A549 (cell line): ENCODE measurements at regions of chr9 and their contacts with region 1.

Region 1: DNA sequence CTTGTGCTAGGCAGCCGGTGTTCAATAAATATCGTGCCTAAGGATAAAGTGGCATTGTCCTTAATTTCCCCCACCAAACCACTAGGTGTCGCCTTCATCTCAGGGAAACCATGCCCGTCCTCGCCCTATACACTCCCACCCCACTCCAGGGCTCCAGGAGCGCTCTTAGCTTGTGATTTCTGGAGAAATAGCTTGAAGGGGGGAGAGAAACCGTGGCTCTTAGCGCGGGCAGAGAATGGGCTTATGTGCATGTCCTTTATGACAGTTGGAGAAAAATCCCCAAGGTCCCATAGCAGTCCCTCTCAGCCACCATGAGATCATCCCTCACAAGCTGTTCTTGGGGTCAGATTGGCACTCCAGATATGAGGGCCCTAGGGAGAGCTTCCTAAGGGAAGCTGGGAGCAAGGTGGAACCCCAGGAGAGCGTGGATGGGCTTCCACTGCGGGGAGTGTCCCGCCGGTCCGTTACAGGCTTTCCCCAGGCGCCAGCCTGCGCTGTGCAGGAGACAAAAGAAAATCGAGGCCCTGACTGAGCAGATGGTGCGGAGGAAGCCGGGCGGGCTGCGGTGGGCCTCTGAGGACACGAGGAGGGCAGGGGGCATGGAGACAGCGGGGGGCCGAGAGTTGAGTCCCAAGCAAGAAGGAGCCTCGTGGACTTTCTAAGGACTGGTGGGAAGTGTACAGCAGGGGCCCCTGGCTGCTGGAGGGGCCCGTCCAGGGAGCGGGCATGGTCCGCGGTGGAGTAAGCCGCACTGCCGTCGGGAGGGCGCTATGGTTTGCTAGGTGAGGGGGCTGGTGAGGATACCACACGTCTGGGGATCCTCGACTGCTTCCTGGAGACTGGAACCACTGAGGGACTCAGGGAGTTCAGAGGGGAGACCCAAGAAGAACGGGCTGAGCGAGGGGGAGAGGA is 750 bp upstream of the NPR2 start:
- DNase-seq: peak; percentile 65 to 85
- ATAC-seq: peak; percentile 87 to 97
- H3K4me3 ChIP-seq: no peak overlapping the region
- H3K27ac ChIP-seq: peak overlapping the region in 1 of 2 experiments; percentile 22; a peak in 1 of 6 replicates
- H3K4me1 ChIP-seq: peaks cover 9% of the 10 kb centered on the region
- CTCF ChIP-seq: peak; percentile 91
- EP300 ChIP-seq: no peak
- POLR2A ChIP-seq: no peak
- RAD21 ChIP-seq: peak; percentile 85 to 92

Region 2: DNA sequence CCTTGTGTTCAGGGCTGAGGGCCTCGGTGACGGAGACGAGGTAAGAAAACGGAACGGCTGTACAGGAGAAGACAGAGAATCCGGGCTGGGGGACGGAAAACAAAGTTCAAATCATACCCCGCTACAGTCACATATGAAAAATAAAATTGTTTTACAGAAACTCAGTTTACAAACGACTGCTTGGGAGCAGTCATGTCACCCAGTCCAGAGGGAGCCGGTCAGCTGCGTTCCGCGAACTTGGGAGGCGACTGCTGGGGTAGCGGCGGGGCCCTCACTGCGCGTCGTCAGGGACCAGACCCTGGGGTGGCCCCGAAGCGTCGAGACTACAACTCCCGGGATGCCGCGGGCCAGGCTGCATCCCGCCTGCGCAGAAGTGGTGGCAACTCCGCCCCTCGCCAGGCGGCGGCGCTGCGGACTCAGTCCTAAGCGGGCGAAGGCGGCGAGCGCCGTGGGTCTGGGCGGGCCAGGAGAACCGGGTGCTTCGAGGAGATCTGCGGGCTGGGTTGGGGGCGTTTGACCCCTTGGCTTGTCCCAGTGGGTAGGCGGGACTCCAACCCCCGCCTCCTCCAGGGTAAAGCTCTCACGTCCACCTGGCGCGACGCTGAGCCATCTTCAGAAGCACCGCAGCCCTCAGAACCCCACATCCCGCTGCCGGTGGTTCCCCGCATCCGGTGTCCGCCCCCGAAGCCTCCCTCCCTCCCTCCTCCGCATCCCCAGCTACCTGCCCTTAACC is 143.9 kb before region 1 on chr9:
- CTCF ChIA-PET with region 1: interaction called, 11 read pairs
- POLR2A ChIA-PET with region 1: no interaction called
- DNase-seq: peak; percentile 90 to 95
- ATAC-seq: peak; percentile 93 to 97
- H3K4me3 ChIP-seq: peak overlapping the region; percentile 52
- H3K27ac ChIP-seq: peak overlapping the region; percentile 92 to 93
- H3K4me1 ChIP-seq: peaks cover 13% of the 10 kb centered on the region
- CTCF ChIP-seq: peak; percentile 87
- EP300 ChIP-seq: no peak
- POLR2A ChIP-seq: peak; percentile 66
- RAD21 ChIP-seq: peak; percentile 81 to 91

Region 3: GRCh38 chr9:35756275-35757225 is 34.1 kb before region 1 on chr9:
- CTCF ChIA-PET with region 1: interaction called, 22 read pairs
- POLR2A ChIA-PET with region 1: interaction called, 3 read pairs
- DNase-seq: peak; percentile 64 to 86
- ATAC-seq: peak; percentile 89 to 91
- H3K4me3 ChIP-seq: peak overlapping the region; percentile 83
- H3K27ac ChIP-seq: peak overlapping the region; percentile 95 to 97
- H3K4me1 ChIP-seq: peaks cover 16% of the 10 kb centered on the region
- CTCF ChIP-seq: peak; percentile 69
- EP300 ChIP-seq: no peak
- POLR2A ChIP-seq: peak; percentile 19
- RAD21 ChIP-seq: peak; percentile 34 to 42; a peak in 3 of 5 replicates

Region 4: DNA sequence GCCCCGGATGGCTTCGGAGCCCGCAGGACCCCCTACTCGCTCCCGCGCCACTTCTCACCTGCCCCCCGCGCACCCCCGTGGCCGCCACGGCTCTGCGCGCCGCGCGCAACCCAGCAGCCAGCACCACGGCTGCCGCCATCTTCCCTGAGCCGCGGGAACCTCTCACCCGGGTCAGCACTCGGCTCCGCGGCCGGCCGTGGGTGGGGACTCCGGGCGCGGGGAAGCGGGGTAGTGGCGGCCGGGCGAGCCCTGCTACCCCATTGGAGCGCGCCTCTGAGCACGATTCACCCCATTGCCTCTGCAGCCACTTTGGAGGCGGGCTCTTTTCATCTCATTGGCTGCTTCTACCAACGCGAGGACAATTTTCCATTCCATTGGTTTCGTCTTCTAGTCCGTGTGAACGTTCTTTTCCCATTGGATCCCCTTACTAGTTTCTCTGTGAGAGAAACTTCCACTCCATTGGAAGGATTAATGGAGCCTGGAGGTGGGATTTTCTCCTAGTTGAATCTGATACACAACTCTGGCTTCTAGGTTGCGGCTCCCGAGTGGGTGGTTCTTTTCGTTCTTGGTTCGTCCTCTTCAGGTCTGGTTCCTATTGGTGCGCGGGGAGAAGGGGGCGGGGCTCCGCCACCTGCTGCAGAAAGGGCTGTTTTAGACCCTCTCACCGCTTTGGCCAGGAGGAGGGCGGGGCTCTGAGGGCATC is 24.4 kb after region 1 on chr9 and contains the start of gene HINT2:
- CTCF ChIA-PET with region 1: interaction called, 68 read pairs
- POLR2A ChIA-PET with region 1: no interaction called
- DNase-seq: peak; percentile 98
- ATAC-seq: peak; percentile 86 to 92
- H3K4me3 ChIP-seq: peak within 1 kb of the TSS; percentile 73
- H3K27ac ChIP-seq: peak within 1 kb of the TSS; percentile 94 to 96
- H3K4me1 ChIP-seq: peaks cover 21% of the 10 kb centered on the region
- CTCF ChIP-seq: no peak
- EP300 ChIP-seq: no peak
- POLR2A ChIP-seq: peak; percentile 88
- RAD21 ChIP-seq: 0 out of 5 replicates have a peak, but pooled peaks of 1 of the 2 experiments have one; percentile 2
- polyA plus RNA-seq, gene HINT2: 46.9 and 47.3 TPM in 2 replicates

Region 5: GRCh38 chr9:35859310-35859989 is 68.8 kb after region 1 on chr9:
- CTCF ChIA-PET with region 1: interaction called, 18 read pairs
- POLR2A ChIA-PET with region 1: no interaction called
- DNase-seq: peak; percentile 29 to 42
- ATAC-seq: peak; percentile 66 to 74
- H3K4me3 ChIP-seq: no peak overlapping the region
- H3K27ac ChIP-seq: no peak overlapping the region
- H3K4me1 ChIP-seq: no peaks in the 10 kb centered on the region
- CTCF ChIP-seq: no peak
- EP300 ChIP-seq: no peak
- POLR2A ChIP-seq: no peak
- RAD21 ChIP-seq: no peak

Region 6: DNA sequence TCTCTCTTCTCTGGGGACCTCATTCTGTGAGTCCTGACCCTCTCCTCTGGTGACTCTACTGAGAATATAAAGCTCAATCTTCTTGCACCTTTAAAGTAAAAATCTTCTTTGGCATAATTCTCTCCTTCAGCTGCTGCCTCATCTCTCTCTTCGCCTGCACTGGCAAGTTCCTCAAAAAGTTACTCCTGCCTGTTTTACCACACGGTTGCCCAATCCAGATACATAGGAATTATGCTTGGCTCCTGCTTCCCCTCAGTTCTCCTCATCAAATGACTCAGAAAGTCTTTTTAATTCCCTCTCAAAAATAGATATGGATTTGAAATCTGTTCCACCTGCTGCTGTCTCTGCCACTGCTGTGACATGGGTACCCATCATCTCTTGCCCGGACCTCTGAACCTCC is 101.0 kb after region 1 on chr9:
- CTCF ChIA-PET with region 1: interaction called, 27 read pairs
- POLR2A ChIA-PET with region 1: no interaction called
- DNase-seq: no peak
- ATAC-seq: no peak
- H3K4me3 ChIP-seq: no peak overlapping the region
- H3K27ac ChIP-seq: no peak overlapping the region
- H3K4me1 ChIP-seq: no peaks in the 10 kb centered on the region
- CTCF ChIP-seq: no peak
- EP300 ChIP-seq: no peak
- POLR2A ChIP-seq: no peak
- RAD21 ChIP-seq: no peak

Region 7: DNA sequence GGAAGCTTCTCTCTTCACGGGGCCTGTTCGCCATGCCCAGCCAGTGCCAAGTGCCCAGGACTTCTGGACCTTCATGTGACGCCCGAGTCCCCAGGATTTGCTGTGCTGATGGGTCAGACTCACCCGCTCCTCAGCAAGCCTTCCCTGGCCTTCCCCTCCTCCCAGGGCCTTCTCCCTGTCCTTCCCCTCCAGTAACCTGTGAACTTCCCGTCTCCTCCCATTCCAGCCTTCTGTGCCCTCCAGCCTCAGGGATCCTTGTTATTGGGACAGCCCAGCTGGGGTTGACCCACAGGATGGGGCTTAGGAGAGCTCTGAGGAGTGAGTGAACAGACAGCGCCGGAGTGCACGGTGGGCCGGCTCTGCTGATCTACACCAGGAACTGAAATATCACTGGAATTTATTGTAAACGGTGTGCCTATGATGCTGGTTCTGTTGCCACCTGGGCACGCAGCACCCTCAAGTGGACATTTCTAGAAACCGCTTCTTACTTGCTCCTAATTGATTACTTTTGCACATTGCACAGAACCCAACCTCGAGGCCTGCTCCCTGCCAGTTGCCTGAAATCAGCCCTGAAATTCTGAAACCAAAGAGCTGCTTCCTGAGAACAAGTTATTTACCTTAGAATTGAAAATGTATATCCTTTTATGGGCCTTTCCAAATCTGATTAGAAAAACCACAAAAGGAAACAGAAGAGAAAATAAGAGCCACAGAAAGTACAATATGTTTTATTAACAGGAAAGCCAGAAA is 120.1 kb after region 1 on chr9:
- CTCF ChIA-PET with region 1: interaction called, 26 read pairs
- POLR2A ChIA-PET with region 1: no interaction called
- DNase-seq: peak; percentile 79 to 82
- ATAC-seq: peak in 1 of 2 experiments; percentile 22; a peak in 3 of 6 replicates
- H3K4me3 ChIP-seq: no peak overlapping the region
- H3K27ac ChIP-seq: peak overlapping the region; percentile 93 to 99
- H3K4me1 ChIP-seq: peaks cover 49% of the 10 kb centered on the region
- CTCF ChIP-seq: peak; percentile 80
- EP300 ChIP-seq: no peak
- POLR2A ChIP-seq: no peak
- RAD21 ChIP-seq: peak; percentile 86 to 87